Dorsolateral prefrontal cortex (tissue), 120 donors: ENCODE measurements at regions of chr19 and their contacts with region 1.

Region 1: DNA sequence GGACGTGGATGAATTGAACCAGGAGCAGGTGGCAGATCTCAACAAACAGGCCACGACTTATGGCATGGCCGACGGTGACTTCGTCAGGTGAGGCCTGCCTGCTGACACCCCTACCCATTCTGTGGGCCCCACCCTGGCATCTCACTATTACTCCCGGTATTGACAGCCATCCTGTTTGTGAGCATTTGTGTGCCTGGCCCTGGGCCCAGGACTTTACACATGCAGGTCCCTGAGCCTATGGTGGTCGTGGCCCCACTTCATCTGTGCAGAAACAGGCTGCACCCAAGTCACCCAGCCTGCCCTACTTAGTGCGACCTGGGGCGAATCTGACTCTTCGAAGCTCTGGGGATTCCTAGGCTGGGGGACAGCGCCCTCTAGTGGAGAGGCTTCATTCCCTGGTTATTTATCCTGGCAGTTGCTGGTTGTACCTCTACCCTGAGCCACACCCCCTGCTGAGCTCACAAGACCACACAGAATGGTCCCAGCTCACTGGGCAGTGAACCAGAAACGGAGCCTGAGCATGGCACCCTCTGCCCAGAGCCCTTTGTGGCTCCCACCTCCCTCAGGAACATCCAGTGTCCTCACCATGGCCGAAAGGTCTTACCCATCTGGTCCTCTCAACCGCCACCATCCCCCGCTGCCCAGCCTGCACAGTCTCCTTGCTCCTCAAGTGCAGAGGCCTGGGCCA is 16.9 kb downstream of the ZNF296 start:
- DNase-seq: peak; percentile 46 to 88 (median 74)
- H3K4me3 ChIP-seq: no peak overlapping the region
- H3K27ac ChIP-seq: peak overlapping the region in 40 of 59 donors; percentile 0 to 75 (median 50)
- H3K27me3 ChIP-seq: no peaks in the 10 kb centered on the region
- CTCF ChIP-seq: peak; percentile 74 to 95 (median 90)

Region 2: GRCh38 chr19:44903602-44904425 is 155.6 kb before region 1 on chr19:
- intact Hi-C with region 1: loop called (anchors 5 to 10 kb)
- DNase-seq: peak; percentile 58 to 89 (median 78)
- H3K4me3 ChIP-seq: peak overlapping the region in 7 of 59 donors; percentile 2 to 33 (median 23)
- H3K27ac ChIP-seq: peak overlapping the region in 33 of 59 donors; percentile 8 to 78 (median 52)
- H3K27me3 ChIP-seq: peaks cover 0 to 25% (median 6%) of the 10 kb centered on the region in 45 donors
- CTCF ChIP-seq: peak; percentile 93 to 100 (median 98)

Region 3: DNA sequence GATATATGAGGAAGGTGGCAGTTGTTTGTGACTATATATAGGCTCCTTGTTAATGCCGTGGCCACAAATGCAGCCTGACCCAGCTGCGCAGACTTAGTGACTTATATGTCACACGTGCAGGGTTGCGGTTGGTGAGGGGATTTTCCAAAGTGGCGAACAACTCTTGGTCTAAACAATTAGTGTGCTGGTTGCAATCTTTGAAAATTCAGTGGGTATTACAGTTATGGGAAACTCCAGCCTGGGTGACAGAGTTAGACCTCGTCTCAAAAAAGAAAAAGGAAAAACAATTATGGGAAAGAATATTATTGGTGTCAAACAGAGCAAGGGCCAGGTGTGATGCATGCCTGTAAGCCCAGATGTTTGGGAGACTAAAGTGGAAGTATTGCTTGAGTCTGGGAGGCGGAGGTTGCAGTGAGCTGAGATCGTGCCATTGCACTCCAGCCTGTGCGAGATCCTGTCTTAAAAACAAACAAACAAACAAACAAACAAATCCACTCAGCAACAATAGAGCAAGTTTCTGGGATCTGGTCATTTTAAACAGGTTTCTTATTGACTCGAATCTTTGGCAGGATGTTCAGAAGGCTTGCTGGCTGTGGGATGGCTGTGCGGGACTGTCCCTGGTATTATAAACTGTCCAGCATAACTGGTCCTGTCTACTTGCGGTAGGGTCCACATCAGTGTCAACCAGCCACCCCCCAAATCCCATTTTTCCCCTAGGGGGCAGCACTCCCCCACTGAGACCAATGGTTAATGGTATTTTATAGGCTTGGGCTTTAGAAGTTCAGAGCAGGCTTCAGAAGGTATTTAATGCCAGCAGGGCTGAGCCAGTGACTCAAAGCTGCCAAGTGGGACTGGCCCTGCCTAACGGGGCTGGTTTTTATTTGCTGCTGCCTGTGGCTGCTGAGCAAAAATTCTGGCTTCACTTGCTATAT is 42.8 kb before region 1 on chr19:
- intact Hi-C with region 1: loop called (anchors 1 to 2 kb)
- DNase-seq: peak; percentile 32 to 87 (median 69)
- H3K4me3 ChIP-seq: no peak overlapping the region
- H3K27ac ChIP-seq: peak overlapping the region in 39 of 59 donors; percentile 2 to 69 (median 37)
- H3K27me3 ChIP-seq: no peaks in the 10 kb centered on the region
- CTCF ChIP-seq: peak; percentile 48 to 92 (median 80)

Region 4: DNA sequence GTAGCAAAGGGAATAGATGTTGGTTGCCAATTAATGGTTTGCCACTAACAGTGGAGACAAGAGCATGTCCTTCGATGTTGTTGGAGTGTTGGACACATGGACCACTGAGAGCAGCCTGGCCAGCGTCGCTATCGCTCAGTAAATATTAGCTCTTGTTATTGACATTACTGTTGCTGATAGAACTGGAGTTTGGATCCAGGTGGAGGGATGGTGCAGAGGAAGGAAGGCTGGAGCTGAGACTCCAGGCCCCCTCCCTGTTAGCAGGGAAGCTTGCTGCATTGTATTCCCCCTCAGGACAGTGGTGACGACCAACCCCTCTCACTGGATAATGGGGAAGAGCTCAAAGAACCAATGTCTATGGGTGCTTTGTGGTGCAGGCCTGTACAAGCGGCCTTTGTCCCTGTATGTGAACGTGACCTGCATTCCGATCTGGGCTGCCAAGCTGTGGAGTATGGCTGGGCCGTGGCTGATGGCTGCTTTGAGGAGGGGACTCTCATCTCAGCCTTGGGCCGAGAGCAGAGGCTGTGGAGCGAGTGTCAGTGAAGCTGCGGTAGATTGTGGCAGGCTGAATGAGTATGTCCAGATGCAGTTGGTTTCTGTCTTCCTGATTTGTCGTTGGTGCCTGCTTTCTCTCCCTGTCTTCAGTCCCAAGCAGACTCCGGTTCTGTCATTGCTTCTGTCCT is 13.6 kb before region 1 on chr19:
- intact Hi-C with region 1: loop called in 1 of 2 experiments (anchors 2 kb)
- DNase-seq: peak; percentile 26 to 95 (median 88)
- H3K4me3 ChIP-seq: peak overlapping the region in 46 of 59 donors; percentile 1 to 48 (median 26)
- H3K27ac ChIP-seq: peak overlapping the region; percentile 84 to 100 (median 97)
- H3K27me3 ChIP-seq: no peaks in the 10 kb centered on the region
- CTCF ChIP-seq: peak in 3 of 56 donors; percentile 12 to 39 (median 14)

Region 5: GRCh38 chr19:45117669-45118068 is 58.2 kb after region 1 on chr19:
- intact Hi-C with region 1: no loop called
- DNase-seq: peak in 4 of 10 donors; percentile 20 to 83 (median 48)
- H3K4me3 ChIP-seq: peak overlapping the region in 2 of 59 donors; percentile 10 to 13
- H3K27ac ChIP-seq: peak overlapping the region in 8 of 59 donors; percentile 10 to 74 (median 20)
- H3K27me3 ChIP-seq: no peaks in the 10 kb centered on the region
- CTCF ChIP-seq: no peak